ENCODE measurements at regions of chr12 and their contacts with region 1.

Region 1: DNA sequence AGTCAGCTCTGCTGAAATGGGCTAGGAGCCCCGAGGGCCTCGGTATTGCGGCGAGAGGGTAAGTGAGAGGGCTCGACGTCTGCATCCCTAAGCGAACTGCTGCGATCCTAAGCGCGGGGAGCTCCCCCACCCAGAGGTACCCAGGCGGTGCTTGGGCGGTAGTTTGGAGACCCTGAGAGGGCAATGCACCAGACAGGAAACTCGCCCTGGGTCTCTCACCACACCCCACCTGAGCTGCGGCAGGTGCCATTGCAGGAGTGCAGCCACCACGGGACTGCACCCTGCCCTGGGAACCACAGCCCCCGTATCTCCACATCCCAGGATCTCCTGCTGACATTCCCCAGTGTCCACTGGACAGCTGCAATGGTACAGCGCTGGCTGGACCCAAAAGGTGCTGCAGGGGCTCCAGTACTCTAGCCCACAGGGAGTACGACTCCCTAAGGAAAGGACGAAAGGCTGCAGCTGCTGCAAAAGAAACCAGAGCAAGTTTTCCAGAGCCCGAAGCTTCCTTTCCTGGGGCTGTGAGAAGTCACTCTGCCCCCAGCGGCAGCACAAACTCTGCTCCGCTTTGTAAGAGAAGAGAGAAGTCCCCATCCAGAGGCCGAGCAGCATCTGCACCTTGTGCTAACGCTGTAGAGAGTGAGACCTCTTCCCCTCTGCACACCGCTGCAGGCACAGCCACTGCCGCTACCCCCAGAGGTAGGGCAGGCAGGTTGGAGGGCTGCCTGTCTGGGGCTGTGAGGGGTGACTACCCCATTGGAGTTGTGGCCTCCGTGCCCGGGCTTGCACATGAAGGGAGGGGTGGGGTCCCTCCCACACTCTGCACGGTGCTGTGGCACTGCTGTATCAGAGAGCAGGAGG is 31.1 kb upstream of the MON2 start:
- DNase-seq: peak in 7 of 9 experiments; percentile 17 to 60 (median 34)
- ATAC-seq: peak; percentile 72
- H3K4me3 ChIP-seq: peak overlapping the region; percentile 46 to 56
- H3K4me3 Mint-ChIP-seq: peak overlapping the region; percentile 87
- H3K27ac ChIP-seq: no peak overlapping the region
- H3K27ac Mint-ChIP-seq: no peak overlapping the region
- H3K4me1 ChIP-seq: peaks cover 12% of the 10 kb centered on the region
- H3K4me1 Mint-ChIP-seq: peaks cover 17% of the 10 kb centered on the region
- H3K27me3 ChIP-seq: peaks cover 3 to 4% of the 10 kb centered on the region in 2 experiments
- H3K27me3 Mint-ChIP-seq: peaks cover 12% of the 10 kb centered on the region
- CTCF ChIP-seq: no peak

Region 2: GRCh38 chr12:62382526-62382925 is 53.0 kb before region 1 on chr12:
- CTCF ChIA-PET with region 1: interaction called, 4 read pairs
- POLR2A ChIA-PET with region 1: no interaction called
- intact Hi-C with region 1: loop called in 1 of 2 experiments (anchors 1 kb)
- DNase-seq: no peak
- ATAC-seq: no peak
- H3K4me3 ChIP-seq: no peak overlapping the region
- H3K4me3 Mint-ChIP-seq: no peak overlapping the region
- H3K27ac ChIP-seq: no peak overlapping the region
- H3K27ac Mint-ChIP-seq: no peak overlapping the region
- H3K4me1 ChIP-seq: no peaks in the 10 kb centered on the region
- H3K4me1 Mint-ChIP-seq: peaks cover 13% of the 10 kb centered on the region
- H3K27me3 ChIP-seq: no peaks in the 10 kb centered on the region
- H3K27me3 Mint-ChIP-seq: no peaks in the 10 kb centered on the region
- CTCF ChIP-seq: no peak

Region 3: DNA sequence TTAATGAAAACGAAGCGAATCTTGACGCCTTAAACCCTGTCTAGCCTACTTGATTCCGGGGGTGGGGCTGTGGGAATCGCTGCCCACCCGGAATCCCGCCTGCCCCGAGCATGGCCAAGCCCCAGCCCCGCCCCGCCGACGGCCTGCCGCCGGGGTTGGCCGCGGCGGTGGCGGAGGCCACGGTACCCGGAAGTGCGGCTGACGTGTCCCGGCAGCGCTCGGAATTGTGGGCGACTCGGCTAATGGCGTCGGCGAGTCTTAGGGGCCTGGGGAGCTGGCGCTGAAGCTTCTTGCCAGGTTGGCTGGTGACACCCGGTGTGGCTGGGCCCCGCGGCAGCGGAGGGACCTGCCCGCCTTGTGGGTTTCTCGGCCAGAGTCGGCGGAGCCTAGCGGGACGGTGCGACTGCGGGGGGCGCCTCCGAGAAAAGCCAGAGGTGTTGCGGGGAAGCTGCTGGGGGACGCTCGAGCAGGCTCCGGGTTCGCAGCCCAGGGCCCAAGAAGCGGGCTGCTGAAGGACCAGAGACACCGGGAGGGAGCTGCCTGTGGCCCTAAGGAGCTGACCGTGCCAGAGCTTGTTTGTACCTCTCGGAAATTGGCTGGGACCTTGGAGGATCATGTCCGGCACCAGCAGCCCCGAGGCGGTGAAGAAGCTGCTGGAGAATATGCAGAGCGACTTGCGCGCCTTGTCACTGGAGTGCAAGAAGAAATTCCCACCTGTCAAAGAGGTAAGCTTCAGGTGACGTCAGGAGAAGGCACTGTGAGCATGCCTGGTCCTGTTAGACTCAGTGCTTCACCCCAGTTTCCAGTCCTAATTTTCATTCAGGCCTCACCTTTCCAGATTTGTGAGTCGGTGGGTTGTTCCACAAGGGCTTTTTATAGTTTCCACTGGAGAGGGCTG is 31.3 kb after region 1 on chr12 and contains the start of gene MON2:
- CTCF ChIA-PET with region 1: interaction called, 15 read pairs
- POLR2A ChIA-PET with region 1: interaction called, 3 read pairs
- intact Hi-C with region 1: no loop called
- DNase-seq: peak; percentile 71 to 94 (median 86)
- ATAC-seq: peak; percentile 92
- H3K4me3 ChIP-seq: peak within 1 kb of the TSS; percentile 96 to 98
- H3K4me3 Mint-ChIP-seq: peak within 1 kb of the TSS; percentile 92
- H3K27ac ChIP-seq: peak within 1 kb of the TSS; percentile 85 to 96
- H3K27ac Mint-ChIP-seq: peak within 1 kb of the TSS; percentile 93
- H3K4me1 ChIP-seq: peaks cover 31% of the 10 kb centered on the region
- H3K4me1 Mint-ChIP-seq: peaks cover 29% of the 10 kb centered on the region
- H3K27me3 ChIP-seq: peaks cover 0 to 2% of the 10 kb centered on the region in 2 experiments
- H3K27me3 Mint-ChIP-seq: no peaks in the 10 kb centered on the region
- CTCF ChIP-seq: no peak
- total RNA-seq, gene MON2: 44.2 to 48.9 TPM

Region 4: GRCh38 chr12:62581288-62582064 is 145.9 kb after region 1 on chr12:
- CTCF ChIA-PET with region 1: interaction called, 13 read pairs
- POLR2A ChIA-PET with region 1: no interaction called
- intact Hi-C with region 1: loop called in 1 of 2 experiments (anchors 1 kb)
- DNase-seq: peak in 2 of 9 experiments; percentile 53 to 67
- ATAC-seq: peak; percentile 59
- H3K4me3 ChIP-seq: no peak overlapping the region
- H3K4me3 Mint-ChIP-seq: no peak overlapping the region
- H3K27ac ChIP-seq: no peak overlapping the region
- H3K27ac Mint-ChIP-seq: no peak overlapping the region
- H3K4me1 ChIP-seq: no peaks in the 10 kb centered on the region
- H3K4me1 Mint-ChIP-seq: no peaks in the 10 kb centered on the region
- H3K27me3 ChIP-seq: no peaks in the 10 kb centered on the region
- H3K27me3 Mint-ChIP-seq: no peaks in the 10 kb centered on the region
- CTCF ChIP-seq: peak; percentile 66

Region 5: GRCh38 chr12:62799126-62799736 is 363.7 kb after region 1 on chr12:
- CTCF ChIA-PET with region 1: interaction called, 124 read pairs
- POLR2A ChIA-PET with region 1: interaction called, 4 read pairs
- intact Hi-C with region 1: loop called (anchors 1 kb)
- DNase-seq: peak; percentile 10 to 73 (median 52)
- ATAC-seq: peak; percentile 93
- H3K4me3 ChIP-seq: no peak overlapping the region
- H3K4me3 Mint-ChIP-seq: no peak overlapping the region
- H3K27ac ChIP-seq: no peak overlapping the region
- H3K27ac Mint-ChIP-seq: no peak overlapping the region
- H3K4me1 ChIP-seq: no peaks in the 10 kb centered on the region
- H3K4me1 Mint-ChIP-seq: no peaks in the 10 kb centered on the region
- H3K27me3 ChIP-seq: no peaks in the 10 kb centered on the region
- H3K27me3 Mint-ChIP-seq: peaks cover 5% of the 10 kb centered on the region
- CTCF ChIP-seq: peak; percentile 89